AG04450 (cell line): ENCODE measurements at regions of chrX and their contacts with region 1.

Region 1: GRCh38 chrX:153708415-153708814 is 15.8 kb downstream of the BCAP31 start:
- DNase-seq: peak; percentile 33
- H3K4me3 ChIP-seq: no peak overlapping the region
- H3K27ac ChIP-seq: no peak overlapping the region
- H3K27me3 ChIP-seq: no peaks in the 10 kb centered on the region
- CTCF ChIP-seq: peak; percentile 64

Region 2: GRCh38 chrX:153488231-153488914 is 220.0 kb before region 1 on chrX:
- CTCF ChIA-PET with region 1: no interaction called
- POLR2A ChIA-PET with region 1: no interaction called
- DNase-seq: no peak
- H3K4me3 ChIP-seq: no peak overlapping the region
- H3K27ac ChIP-seq: peak overlapping the region; percentile 39
- H3K27me3 ChIP-seq: no peaks in the 10 kb centered on the region
- CTCF ChIP-seq: no peak

Region 3: GRCh38 chrX:153539171-153539978 is 169.0 kb before region 1 on chrX:
- CTCF ChIA-PET with region 1: interaction called, 21 read pairs
- POLR2A ChIA-PET with region 1: no interaction called
- DNase-seq: no peak
- H3K4me3 ChIP-seq: no peak overlapping the region
- H3K27ac ChIP-seq: no peak overlapping the region
- H3K27me3 ChIP-seq: no peaks in the 10 kb centered on the region
- CTCF ChIP-seq: peak; percentile 83

Region 4: DNA sequence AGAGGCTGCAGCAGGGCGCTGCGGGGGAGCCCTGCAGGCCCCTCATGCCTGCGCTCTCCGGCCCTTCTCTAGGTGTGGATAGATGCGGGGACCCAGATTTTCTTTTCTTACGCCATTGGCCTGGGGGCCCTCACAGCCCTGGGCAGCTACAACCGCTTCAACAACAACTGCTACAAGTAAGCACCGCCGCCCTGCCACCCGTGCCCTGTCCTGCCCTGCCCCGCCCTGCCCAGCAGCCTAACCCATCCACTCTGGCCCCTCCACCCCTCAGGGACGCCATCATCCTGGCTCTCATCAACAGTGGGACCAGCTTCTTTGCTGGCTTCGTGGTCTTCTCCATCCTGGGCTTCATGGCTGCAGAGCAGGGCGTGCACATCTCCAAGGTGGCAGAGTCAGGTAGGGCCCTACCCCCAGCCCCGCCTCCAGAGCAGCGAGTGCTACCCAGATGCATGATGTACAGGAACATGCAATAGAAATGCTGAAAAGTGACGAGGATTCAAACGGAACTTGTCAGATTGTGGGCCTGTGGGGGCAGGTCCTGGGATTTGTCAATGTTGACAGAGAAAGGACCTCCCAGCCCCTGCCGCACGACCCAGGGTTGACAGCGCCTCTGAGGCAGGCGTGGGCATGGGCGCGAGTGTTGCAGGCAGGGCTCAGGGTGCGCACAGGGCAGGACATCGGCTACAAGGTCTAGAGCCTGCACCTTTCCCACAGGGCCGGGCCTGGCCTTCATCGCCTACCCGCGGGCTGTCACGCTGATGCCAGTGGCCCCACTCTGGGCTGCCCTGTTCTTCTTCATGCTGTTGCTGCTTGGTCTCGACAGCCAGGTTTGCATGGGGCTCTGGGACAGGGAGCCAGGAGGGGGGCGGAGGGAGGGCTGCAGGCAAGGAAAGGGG is 15.0 kb before region 1 on chrX:
- CTCF ChIA-PET with region 1: no interaction called
- POLR2A ChIA-PET with region 1: no interaction called
- DNase-seq: no peak
- H3K4me3 ChIP-seq: no peak overlapping the region
- H3K27ac ChIP-seq: no peak overlapping the region
- H3K27me3 ChIP-seq: no peaks in the 10 kb centered on the region
- CTCF ChIP-seq: no peak

Region 5: GRCh38 chrX:153719238-153719637 is 10.8 kb after region 1 on chrX:
- CTCF ChIA-PET with region 1: interaction called, 11 read pairs
- POLR2A ChIA-PET with region 1: no interaction called
- DNase-seq: no peak
- H3K4me3 ChIP-seq: no peak overlapping the region
- H3K27ac ChIP-seq: no peak overlapping the region
- H3K27me3 ChIP-seq: no peaks in the 10 kb centered on the region
- CTCF ChIP-seq: no peak